Ascending aorta (tissue), 2 donors: ENCODE measurements at regions of chr15 and their contacts with region 1.

Region 1: DNA sequence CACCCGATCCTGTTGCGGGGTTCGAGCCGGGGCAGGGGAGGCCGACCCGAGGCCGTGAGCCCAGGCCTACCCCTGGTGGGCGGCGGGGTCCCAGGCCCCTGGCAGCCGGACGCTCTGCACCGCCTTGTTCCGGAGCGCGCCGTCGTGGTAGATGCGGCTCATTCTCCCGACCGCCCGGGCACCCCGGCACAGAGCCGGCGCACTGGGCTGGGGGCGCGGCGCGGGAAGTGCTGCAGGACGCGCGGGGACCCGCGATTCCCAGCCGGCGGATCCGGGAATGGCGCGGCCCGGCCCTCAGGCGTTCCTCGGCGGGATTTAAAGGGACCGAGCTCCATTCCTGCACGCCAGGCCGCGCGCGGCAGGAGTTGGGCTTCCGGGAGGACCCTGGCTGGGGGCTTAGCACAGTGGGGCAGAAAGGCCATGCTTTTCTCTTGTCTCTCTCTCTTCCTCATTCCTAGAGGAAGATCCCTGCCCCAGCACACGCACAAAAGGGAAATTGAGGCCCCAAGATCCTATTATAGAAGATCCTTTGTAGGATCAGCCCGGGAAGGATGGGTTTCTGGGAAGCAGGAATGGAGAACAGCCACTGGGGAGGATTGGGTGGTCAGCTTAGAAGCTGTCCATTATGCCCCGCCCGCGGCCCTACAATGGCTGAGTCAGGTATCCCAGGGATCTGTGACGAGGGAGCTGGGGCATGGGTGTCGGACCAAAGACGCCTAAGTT is at the start of gene ARPIN:
- DNase-seq: peak in 1 of 2 donors; percentile 74
- H3K4me3 ChIP-seq: peak within 1 kb of the TSS; percentile 77 to 95
- H3K27ac ChIP-seq: peak within 1 kb of the TSS; percentile 53 to 74
- H3K4me1 ChIP-seq: peaks cover 0 to 12% of the 10 kb centered on the region in 2 donors
- H3K27me3 ChIP-seq: no peaks in the 10 kb centered on the region
- CTCF ChIP-seq: no peak
- total RNA-seq, gene ARPIN: 29.8 TPM

Region 2: DNA sequence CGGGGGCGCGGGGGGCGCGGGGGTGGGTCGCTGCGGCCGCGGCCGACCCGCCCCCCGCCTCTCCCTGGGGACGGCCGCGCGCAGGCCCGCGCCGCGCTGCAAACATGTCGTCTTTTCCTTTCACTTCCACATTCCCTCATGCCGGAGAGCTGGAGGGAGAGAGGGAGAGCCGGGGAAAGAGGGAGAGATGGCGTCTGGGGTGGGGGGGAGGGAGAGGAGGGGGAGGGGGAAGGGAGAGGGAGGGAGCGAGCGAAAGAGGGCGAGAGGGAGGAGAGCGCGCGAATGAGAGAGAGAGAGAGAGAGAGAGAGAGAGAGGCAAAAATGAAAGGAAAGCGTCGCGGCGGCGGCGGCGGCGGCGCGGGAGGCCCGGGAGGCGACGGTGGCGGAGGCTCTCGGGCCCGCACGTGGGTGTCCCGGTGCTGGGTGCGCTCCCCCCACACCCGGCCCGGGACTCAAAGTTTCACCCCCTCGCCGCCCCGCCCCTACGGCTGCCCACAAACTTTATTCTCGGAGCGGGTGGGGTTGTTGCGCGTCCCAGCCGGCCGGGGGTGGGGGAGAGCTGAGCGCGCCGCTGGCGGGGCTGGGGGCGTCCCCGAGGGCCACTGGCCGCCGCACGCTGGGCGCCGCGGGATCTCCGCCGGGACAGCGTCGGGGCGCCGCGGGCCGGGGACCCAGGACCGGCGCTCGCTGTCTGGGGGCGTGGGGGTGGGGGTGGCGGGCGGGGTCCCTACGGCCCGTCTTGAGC is 89.0 kb after region 1 on chr15:
- intact Hi-C with region 1: loop called (anchors 5 kb)
- DNase-seq: peak in 1 of 2 donors; percentile 76
- H3K4me3 ChIP-seq: peak overlapping the region; percentile 86 to 96
- H3K27ac ChIP-seq: peak overlapping the region; percentile 81 to 90
- H3K4me1 ChIP-seq: peaks cover 0 to 34% of the 10 kb centered on the region in 2 donors
- H3K27me3 ChIP-seq: no peaks in the 10 kb centered on the region
- CTCF ChIP-seq: no peak

Region 3: GRCh38 chr15:90071208-90071807 is 158.5 kb after region 1 on chr15:
- intact Hi-C with region 1: loop called (anchors 5 kb)
- DNase-seq: peak; percentile 50 to 90
- H3K4me3 ChIP-seq: no peak overlapping the region
- H3K27ac ChIP-seq: no peak overlapping the region
- H3K4me1 ChIP-seq: peaks cover 0 to 2% of the 10 kb centered on the region in 2 donors
- H3K27me3 ChIP-seq: no peaks in the 10 kb centered on the region
- CTCF ChIP-seq: peak; percentile 59 to 72 (median 66)

Region 4: DNA sequence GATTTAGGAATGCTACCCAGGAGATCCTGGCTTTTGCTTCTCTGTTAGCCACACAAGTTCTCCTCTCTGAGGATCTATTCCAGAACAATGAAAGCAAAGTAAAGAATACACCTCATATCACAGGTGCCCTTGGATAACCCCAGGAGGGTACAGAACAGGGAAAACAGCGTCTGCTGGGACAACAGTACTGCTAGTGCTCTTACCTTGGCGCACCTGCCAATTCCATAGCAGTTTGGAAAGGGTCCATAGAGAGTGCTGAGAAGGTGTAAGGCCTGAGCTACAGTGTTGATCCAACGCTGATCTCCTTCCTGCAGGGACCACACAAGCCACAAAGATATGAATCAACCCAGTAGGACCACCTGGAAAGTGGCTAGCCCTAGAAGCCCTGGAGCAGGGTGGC is 1094.4 kb after region 1 on chr15:
- intact Hi-C with region 1: no loop called
- DNase-seq: no peak
- H3K4me3 ChIP-seq: no peak overlapping the region
- H3K27ac ChIP-seq: no peak overlapping the region
- H3K4me1 ChIP-seq: no peaks in the 10 kb centered on the region
- H3K27me3 ChIP-seq: no peaks in the 10 kb centered on the region
- CTCF ChIP-seq: no peak